ENCODE measurements at regions of chr2 and their contacts with region 1.

Region 1: GRCh38 chr2:127197475-127198385 is 22.4 kb downstream of the CYP27C1 start:
- DNase-seq: peak; percentile 63 to 82 (median 66)
- ATAC-seq: peak; percentile 100
- H3K4me3 ChIP-seq: no peak overlapping the region
- H3K27ac ChIP-seq: no peak overlapping the region
- H3K4me1 ChIP-seq: peaks cover 0 to 10% of the 10 kb centered on the region in 2 experiments; a peak in 2 of 5 replicates
- H3K27me3 ChIP-seq: peaks cover 39 to 56% of the 10 kb centered on the region in 2 experiments
- CTCF ChIP-seq: peak; percentile 80 to 89 (median 88)
- EP300 ChIP-seq: no peak
- POLR2A ChIP-seq: no peak
- RAD21 ChIP-seq: peak; percentile 68 to 92

Region 2: DNA sequence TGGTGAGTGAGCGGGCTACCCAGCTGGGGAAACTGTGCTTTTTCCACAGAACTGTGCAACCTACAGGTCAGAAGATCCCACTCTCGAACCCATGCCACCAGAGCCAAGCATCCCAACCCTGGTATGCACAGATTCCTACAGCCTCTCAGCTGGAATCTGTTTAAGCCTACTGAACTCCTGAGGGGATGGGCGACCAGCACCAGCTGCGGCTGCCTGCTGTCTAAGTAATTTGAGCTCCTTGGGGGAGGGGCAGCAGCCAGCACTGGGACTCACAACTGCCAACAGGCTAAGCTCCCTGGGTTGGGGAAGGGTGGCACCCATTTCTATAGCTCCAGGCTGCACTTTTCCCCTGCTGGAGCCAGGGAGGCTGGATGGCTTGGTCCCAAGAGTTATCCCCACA is 10.6 kb after region 1 on chr2:
- CTCF ChIA-PET with region 1: no interaction called
- POLR2A ChIA-PET with region 1: no interaction called
- in situ Hi-C with region 1: no loop called
- intact Hi-C with region 1: no loop called
- DNase-seq: no peak
- ATAC-seq: no peak
- H3K4me3 ChIP-seq: no peak overlapping the region
- H3K27ac ChIP-seq: no peak overlapping the region
- H3K4me1 ChIP-seq: peaks cover 0 to 5% of the 10 kb centered on the region in 2 experiments; a peak in 1 of 5 replicates
- H3K27me3 ChIP-seq: peaks cover 6 to 34% of the 10 kb centered on the region in 2 experiments; a peak in 4 of 5 replicates
- CTCF ChIP-seq: no peak
- EP300 ChIP-seq: no peak
- POLR2A ChIP-seq: no peak
- RAD21 ChIP-seq: no peak

Region 3: DNA sequence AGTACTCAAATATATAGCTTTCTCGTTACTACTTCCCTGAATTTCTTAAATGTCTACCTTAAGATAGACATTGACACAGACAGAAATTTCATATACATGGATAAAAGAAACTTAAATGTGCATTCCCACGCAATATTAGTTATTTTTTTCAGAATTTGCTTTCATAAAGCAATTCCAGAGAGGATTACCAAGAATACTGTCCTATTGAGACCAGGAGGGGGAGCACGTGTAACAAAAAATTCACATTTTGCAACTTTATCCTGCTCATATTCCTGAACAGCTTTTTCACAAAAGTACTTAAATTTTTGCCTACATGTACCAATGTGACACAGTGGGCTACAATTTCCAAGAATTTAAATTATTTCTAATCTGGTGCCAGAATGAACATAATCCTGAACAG is 126.9 kb after region 1 on chr2:
- CTCF ChIA-PET with region 1: no interaction called
- POLR2A ChIA-PET with region 1: no interaction called
- in situ Hi-C with region 1: no loop called
- intact Hi-C with region 1: loop called (anchors 10 kb)
- DNase-seq: peak; percentile 31 to 54 (median 38)
- ATAC-seq: peak; percentile 79
- H3K4me3 ChIP-seq: no peak overlapping the region
- H3K27ac ChIP-seq: no peak overlapping the region
- H3K4me1 ChIP-seq: no peaks in the 10 kb centered on the region
- H3K27me3 ChIP-seq: no peaks in the 10 kb centered on the region
- CTCF ChIP-seq: peak; percentile 50 to 76 (median 51); a peak in 4 of 6 replicates
- EP300 ChIP-seq: no peak
- POLR2A ChIP-seq: no peak
- RAD21 ChIP-seq: peak; percentile 72 to 78

Region 4: GRCh38 chr2:127453392-127454171 is 255.9 kb after region 1 on chr2:
- CTCF ChIA-PET with region 1: interaction called, 15 read pairs
- POLR2A ChIA-PET with region 1: no interaction called
- in situ Hi-C with region 1: loop called (anchors 10 kb)
- intact Hi-C with region 1: loop called (anchors 1 kb)
- DNase-seq: peak; percentile 66 to 74 (median 70)
- ATAC-seq: peak; percentile 98
- H3K4me3 ChIP-seq: no peak overlapping the region
- H3K27ac ChIP-seq: no peak overlapping the region
- H3K4me1 ChIP-seq: no peaks in the 10 kb centered on the region; a peak in 1 of 5 replicates
- H3K27me3 ChIP-seq: peaks cover 0 to 14% of the 10 kb centered on the region in 2 experiments; a peak in 2 of 5 replicates
- CTCF ChIP-seq: peak; percentile 66 to 89 (median 77)
- EP300 ChIP-seq: no peak
- POLR2A ChIP-seq: no peak
- RAD21 ChIP-seq: peak; percentile 52 to 84

Region 5: DNA sequence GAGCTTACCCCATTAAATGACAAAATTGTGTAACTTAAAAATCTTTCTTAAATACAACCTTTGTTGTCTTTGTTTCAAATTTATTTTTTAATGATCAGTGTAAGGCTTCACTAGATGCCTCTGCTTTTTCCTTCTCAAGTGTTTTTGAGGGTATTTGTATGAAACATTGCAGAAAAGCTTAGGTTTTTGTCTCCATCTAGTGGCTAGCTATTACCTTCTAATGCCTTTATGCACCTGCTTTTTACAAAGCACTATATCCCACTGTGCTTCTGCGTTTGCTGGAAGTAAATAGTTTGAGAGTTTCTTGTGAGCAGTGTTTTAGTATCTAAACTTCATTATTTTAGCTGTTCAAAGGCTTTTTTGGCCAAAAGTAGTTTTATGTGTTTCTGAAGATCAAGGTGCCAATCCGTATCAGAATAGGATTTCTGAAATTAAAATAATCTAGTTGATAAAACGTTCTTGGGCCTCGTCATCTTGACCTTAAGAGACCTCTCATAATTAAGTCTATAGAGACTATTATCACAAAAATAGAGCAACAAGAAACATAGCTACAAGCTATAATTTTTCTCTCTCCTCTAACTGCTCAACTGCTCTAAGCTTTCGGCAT is 281.6 kb after region 1 on chr2:
- CTCF ChIA-PET with region 1: interaction called, 10 read pairs
- POLR2A ChIA-PET with region 1: no interaction called
- in situ Hi-C with region 1: no loop called
- intact Hi-C with region 1: loop called (anchors 1 kb)
- DNase-seq: peak in 3 of 4 experiments; percentile 27 to 48 (median 29)
- ATAC-seq: peak; percentile 96
- H3K4me3 ChIP-seq: no peak overlapping the region
- H3K27ac ChIP-seq: no peak overlapping the region
- H3K4me1 ChIP-seq: no peaks in the 10 kb centered on the region
- H3K27me3 ChIP-seq: no peaks in the 10 kb centered on the region
- CTCF ChIP-seq: peak; percentile 45 to 75 (median 72); a peak in 5 of 6 replicates
- EP300 ChIP-seq: no peak
- POLR2A ChIP-seq: no peak
- RAD21 ChIP-seq: peak; percentile 79

Region 6: GRCh38 chr2:127649684-127650040 is 451.9 kb after region 1 on chr2:
- CTCF ChIA-PET with region 1: interaction called, 3 read pairs
- POLR2A ChIA-PET with region 1: interaction called, 3 read pairs
- in situ Hi-C with region 1: no loop called
- intact Hi-C with region 1: loop called (anchors 5 kb)
- DNase-seq: peak; percentile 76 to 88 (median 78)
- ATAC-seq: peak; percentile 87
- H3K4me3 ChIP-seq: no peak overlapping the region
- H3K27ac ChIP-seq: no peak overlapping the region
- H3K4me1 ChIP-seq: peaks cover 0 to 44% of the 10 kb centered on the region in 2 experiments; a peak in 2 of 5 replicates
- H3K27me3 ChIP-seq: peaks cover 55 to 85% of the 10 kb centered on the region in 2 experiments
- CTCF ChIP-seq: peak; percentile 84 to 89 (median 89)
- EP300 ChIP-seq: no peak
- POLR2A ChIP-seq: no peak
- RAD21 ChIP-seq: peak; percentile 57 to 86